ENCODE measurements at regions of chr7 and their contacts with region 1.

Region 1: DNA sequence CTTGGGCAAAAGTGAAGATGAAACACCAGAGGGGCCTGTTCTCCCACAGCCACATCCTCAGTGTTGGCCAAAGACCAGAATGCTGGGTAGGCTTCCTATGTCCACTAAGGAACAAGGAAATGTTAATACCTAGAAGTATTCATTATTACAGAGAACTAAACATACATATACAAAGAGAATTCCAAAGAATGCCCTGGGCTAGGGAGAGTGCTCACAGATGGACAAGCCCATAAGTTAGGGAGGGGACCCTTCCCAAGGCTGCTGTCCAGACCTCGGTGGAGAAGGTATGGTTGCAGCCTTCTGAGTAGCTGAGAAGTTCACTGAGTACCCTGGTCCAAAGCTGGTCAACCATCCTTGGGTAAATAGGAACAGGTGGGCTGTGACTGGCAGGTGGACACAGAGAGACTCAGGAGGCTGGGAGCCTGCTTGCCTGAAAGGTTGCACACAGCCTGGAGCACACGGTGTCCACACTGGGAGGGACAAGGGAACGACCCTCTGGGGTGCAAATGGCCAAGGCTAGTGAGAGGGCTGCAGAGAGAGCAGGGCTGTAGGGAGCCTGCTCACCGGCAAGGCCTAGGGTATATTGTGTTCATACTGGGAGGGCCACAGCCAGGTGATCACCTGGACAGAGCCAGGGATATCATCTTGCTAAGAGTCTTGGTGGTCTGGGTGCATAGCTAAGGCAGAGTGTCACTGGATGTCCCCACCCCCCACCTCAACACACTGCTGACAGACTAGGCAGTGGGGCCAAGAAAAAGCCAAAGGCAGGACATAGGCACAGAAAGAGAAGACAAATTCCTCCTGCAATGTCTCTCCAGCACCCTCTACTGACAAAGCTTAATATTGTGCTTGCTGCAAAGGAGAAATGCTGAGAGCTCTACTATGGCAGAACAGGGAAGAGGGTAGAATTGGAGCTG is 40.3 kb downstream of the CPVL start:
- DNase-seq: peak in 6 of 7 donors; percentile 40 to 63 (median 51)
- H3K4me3 ChIP-seq: no peak overlapping the region
- H3K27ac ChIP-seq: no peak overlapping the region
- H3K4me1 ChIP-seq: peaks cover 8 to 17% of the 10 kb centered on the region in 2 donors
- H3K27me3 ChIP-seq: no peaks in the 10 kb centered on the region
- CTCF ChIP-seq: peak; percentile 71 to 88 (median 85)
- POLR2A ChIP-seq: no peak

Region 2: GRCh38 chr7:28921822-28922221 is 184.2 kb before region 1 on chr7:
- intact Hi-C with region 1: loop called (anchors 2 to 5 kb)
- DNase-seq: peak; percentile 45 to 80 (median 59)
- H3K4me3 ChIP-seq: no peak overlapping the region
- H3K27ac ChIP-seq: no peak overlapping the region
- H3K4me1 ChIP-seq: peaks cover 0 to 12% of the 10 kb centered on the region in 2 donors
- H3K27me3 ChIP-seq: no peaks in the 10 kb centered on the region
- CTCF ChIP-seq: peak; percentile 85 to 94 (median 88)
- POLR2A ChIP-seq: no peak

Region 3: DNA sequence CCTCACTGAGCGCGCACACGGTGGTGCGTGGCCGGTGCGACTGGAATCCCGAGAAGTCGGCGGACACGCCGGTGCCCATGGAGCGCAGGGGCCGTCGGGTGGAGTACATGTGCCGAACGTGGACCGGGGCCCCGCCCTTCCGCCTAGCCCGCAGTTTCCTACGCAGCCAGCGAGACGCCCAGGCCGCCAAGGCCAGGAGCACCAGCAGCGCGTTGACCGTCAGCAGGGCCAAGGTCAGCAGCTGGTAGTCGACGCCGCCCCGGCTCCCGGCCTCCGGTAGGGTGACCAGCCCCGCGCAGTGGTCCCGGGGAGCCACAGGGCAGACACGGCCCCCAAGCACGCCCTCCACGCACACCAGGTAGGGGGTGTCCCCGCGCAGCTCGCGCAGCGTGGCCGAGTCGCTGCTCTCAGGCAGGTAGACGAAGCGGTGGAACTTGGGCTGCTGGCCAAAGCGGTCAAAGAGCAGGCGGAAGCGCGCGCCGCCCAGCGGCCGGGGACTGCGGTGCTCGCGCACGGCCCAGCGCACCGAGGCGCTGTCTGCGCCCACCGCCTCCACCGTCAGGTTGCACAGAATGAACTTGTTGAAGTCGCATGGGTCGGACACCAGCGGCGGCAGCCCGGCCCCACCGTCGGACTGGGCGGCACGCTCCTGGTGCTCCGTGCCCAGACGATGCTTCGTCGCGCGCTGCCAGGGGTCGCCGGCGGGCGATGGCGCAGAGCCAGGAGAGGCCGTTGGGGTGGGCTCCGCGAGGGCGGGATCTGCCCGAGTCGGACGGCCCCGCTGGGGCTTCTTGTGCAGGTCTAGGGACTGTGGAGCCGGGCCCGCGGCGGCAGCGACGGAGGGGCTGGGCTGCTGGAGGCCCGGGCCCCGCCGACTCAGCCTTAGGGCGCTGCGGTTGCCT is 150.0 kb before region 1 on chr7:
- intact Hi-C with region 1: loop called in 1 of 2 experiments (anchors 5 kb)
- DNase-seq: peak; percentile 44 to 87 (median 69)
- H3K4me3 ChIP-seq: peak overlapping the region in 2 of 4 donors; percentile 36 to 58
- H3K27ac ChIP-seq: peak overlapping the region in 2 of 5 donors; percentile 58 to 68
- H3K4me1 ChIP-seq: peaks cover 6 to 32% of the 10 kb centered on the region in 2 donors
- H3K27me3 ChIP-seq: peaks cover 36% of the 10 kb centered on the region
- CTCF ChIP-seq: peak; percentile 14 to 78 (median 50)
- POLR2A ChIP-seq: no peak